H1 (cell line): ENCODE measurements at regions of chr6 and their contacts with region 1.

Region 1: DNA sequence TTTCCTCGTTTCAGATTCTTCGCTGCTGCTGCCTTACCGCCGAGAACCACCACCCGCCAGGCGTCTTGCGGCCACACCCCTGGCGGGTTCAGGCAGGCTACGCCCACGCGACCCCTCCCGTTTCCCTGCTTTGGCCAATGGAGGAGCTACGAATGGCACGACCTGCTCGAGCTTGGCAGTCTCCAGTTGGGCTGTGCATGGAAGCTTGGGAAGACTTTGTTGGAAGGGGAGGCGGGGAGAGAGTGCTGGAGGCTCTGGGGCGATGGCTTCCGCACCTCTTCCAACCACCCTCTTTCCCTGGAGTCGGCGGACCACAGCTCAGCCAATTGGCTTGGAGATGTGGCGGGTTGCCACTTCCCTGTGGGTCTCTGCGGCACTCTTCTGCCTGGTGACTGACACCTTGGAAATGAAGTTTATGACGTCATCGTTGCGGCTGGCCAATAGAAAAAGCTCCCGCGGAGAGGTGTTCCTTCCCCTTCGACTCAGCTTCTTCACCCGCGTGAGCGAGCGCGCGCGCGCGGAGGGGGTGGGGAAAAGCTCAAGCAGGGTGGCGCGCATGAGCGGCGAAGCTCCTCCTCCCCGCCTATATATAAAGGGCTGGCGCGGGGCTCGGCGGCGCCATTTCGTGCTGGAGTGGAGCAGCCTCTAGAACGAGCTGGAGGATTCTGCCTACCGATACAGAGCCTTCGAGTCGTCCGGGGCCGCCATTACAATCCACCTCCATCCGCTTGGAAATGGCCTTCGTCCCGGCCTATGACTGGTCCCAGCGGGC is 3.4 kb downstream of the BRD2 start:
- DNase-seq: peak; percentile 98 to 99
- H3K4me3 ChIP-seq: peak overlapping the region; percentile 90 to 99 (median 98)
- H3K27ac ChIP-seq: peak overlapping the region; percentile 99
- H3K4me1 ChIP-seq: peaks cover 0 to 14% (median 7%) of the 10 kb centered on the region in 4 experiments; a peak in 5 of 7 replicates
- H3K27me3 ChIP-seq: no peaks in the 10 kb centered on the region
- CTCF ChIP-seq: no peak; a peak in 1 of 4 replicates
- EP300 ChIP-seq: no peak; a peak in 1 of 3 replicates
- POLR2A ChIP-seq: peak in 1 of 2 experiments; percentile 99; a peak in 2 of 3 replicates
- RAD21 ChIP-seq: no peak

Region 2: DNA sequence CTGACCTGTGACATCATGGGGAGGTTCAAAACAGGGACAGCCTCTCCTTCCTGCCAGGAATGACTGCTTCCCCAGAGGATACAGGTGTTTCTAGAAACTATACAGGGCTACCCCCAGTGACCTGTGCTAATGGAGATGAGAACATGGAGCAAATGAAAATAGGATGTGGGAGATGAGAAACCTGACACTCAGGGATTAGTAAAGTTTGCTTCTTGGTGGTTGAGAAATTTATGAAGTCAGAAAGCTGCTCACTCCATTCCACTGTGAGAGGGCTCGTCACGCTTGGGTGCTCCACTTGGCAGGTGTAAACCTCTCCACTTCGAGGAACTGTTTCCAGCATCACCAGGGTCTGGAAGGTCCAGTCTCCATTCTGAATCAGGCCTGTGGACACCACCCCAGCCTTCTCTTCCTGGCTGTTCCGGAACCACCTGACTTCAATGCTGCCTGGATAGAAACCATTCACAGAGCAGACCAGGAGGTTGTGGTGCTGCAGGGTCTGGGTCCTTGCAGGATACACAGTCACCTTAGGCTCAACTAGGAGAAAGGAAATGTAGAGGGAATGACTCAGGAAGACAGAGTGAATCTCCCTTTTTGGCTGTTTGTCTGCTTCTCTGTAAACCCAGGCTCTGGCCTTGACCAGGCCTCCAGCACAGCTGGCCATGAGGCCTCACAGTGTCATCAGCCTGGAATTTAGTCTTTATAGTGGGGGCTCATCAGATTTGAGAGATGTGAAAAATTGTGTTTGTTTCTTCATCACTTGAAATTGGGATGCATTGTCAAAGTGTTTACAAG is 452.5 kb before region 1 on chr6:
- CTCF ChIA-PET with region 1: no interaction called
- POLR2A ChIA-PET with region 1: no interaction called
- DNase-seq: no peak
- H3K4me3 ChIP-seq: no peak overlapping the region
- H3K27ac ChIP-seq: no peak overlapping the region
- H3K4me1 ChIP-seq: no peaks in the 10 kb centered on the region
- H3K27me3 ChIP-seq: no peaks in the 10 kb centered on the region
- CTCF ChIP-seq: no peak
- EP300 ChIP-seq: no peak
- POLR2A ChIP-seq: no peak
- RAD21 ChIP-seq: no peak

Region 3: DNA sequence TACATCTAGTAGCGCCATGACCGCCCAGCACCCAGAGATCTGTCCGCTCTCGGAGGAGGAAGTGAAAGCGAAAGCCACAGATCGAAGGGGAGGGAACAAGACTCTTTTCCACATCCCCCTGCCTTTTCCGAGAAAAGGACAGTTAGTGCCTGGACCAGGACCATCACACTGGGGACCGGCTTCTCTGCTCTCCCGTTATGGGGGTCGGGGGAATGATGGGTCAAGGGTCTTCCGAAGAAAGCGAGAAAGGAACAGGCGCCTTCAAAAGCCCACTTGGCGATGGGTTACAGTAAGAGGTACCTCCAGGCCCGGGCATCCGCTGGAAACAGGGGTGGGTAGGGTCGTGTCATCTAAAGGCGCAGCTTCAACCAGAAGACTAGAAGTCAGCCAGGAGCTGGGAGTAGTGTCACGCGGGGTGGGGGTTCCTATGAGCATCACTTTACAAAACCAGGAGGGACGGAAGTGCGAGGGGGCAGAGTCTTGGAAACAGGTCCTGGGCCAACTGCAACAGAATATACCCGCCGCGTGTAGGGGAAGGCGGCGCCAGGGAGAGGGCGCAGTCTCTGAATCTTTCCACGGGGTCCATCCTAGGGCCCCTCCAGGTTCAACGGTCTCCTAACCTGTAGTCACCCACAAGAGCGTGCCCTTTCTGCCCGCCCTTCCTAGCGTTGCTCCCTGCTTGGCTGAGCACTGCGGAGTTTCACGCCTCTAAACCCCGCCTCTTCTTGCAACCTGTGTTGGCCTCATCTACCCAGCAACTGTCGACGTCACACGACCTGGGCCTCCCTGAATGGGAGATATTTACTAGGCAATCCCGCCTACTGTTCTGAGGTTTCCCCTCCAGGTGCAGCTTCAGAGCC is 127.6 kb before region 1 on chr6 and contains the start of gene PSMB8:
- CTCF ChIA-PET with region 1: interaction called, 14 read pairs
- POLR2A ChIA-PET with region 1: interaction called, 26 read pairs
- DNase-seq: peak; percentile 88 to 95
- H3K4me3 ChIP-seq: peak within 1 kb of the TSS; percentile 59 to 93 (median 88)
- H3K27ac ChIP-seq: no peak within 1 kb of the TSS
- H3K4me1 ChIP-seq: peaks cover 0 to 3% (median 0%) of the 10 kb centered on the region in 4 experiments; a peak in 2 of 7 replicates
- H3K27me3 ChIP-seq: peaks cover 0 to 11% (median 10%) of the 10 kb centered on the region in 4 experiments; a peak in 4 of 7 replicates
- CTCF ChIP-seq: peak in 1 of 3 experiments; percentile 8; a peak in 1 of 4 replicates
- EP300 ChIP-seq: no peak
- POLR2A ChIP-seq: peak in 1 of 2 experiments; percentile 75; a peak in 2 of 3 replicates
- RAD21 ChIP-seq: no peak
- total RNA-seq, gene PSMB8: 18.4 and 22.0 TPM in 2 replicates

Region 4: DNA sequence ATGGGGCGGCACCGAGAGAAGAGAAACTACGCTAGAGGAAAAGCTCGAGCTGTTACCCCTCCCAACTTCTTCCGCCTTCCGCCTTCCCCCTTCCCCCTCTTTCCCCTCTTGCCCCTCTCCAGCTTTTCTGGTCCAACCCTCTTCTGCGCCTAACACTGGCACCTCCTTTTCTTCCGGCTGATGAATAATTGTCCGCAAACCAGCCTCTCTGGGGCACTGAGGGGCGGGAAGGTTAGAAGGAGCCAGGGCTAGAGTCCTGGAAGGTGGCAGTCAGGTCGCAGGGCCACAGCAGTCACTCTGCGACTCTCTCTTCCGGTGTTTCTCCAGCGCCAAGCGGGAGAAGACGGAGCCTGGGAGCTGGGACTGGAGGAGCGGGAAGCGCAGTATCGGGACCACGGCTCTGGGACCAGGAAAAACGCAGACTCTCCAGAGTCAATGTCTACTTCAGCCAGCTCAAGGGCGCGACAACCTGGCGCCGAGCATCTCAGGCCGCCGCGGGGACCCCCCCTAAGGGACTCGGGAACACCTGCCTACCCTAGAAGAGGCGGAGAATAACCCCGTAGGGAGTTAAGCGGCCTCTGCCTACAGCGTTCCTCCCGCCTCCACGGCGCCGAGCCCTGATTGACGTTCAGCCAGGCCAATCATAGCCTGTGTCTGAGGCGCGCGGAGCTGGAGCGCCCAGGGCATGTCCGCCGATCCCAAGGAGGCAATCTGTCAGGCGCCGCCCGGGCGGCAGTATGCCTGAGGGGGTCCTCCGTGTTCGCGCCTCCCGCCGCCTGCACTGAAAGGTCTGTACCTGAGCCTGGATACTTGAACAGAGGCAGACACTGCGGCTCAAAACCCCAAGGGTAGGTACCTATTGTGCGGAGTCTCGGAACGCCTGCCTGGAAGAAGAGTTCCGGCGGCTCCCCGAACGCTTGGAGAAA is 77.4 kb before region 1 on chr6:
- CTCF ChIA-PET with region 1: interaction called, 3 read pairs
- POLR2A ChIA-PET with region 1: interaction called, 117 read pairs
- DNase-seq: peak; percentile 84 to 99
- H3K4me3 ChIP-seq: peak overlapping the region; percentile 74 to 92 (median 84)
- H3K27ac ChIP-seq: peak overlapping the region; percentile 39; the same call in 1 of the 2 replicates
- H3K4me1 ChIP-seq: peaks cover 0 to 4% (median 1%) of the 10 kb centered on the region in 4 experiments; a peak in 2 of 7 replicates
- H3K27me3 ChIP-seq: no peaks in the 10 kb centered on the region; a peak in 1 of 7 replicates
- CTCF ChIP-seq: no peak
- EP300 ChIP-seq: no peak
- POLR2A ChIP-seq: peak in 1 of 2 experiments; percentile 69; a peak in 2 of 3 replicates
- RAD21 ChIP-seq: no peak

Region 5: DNA sequence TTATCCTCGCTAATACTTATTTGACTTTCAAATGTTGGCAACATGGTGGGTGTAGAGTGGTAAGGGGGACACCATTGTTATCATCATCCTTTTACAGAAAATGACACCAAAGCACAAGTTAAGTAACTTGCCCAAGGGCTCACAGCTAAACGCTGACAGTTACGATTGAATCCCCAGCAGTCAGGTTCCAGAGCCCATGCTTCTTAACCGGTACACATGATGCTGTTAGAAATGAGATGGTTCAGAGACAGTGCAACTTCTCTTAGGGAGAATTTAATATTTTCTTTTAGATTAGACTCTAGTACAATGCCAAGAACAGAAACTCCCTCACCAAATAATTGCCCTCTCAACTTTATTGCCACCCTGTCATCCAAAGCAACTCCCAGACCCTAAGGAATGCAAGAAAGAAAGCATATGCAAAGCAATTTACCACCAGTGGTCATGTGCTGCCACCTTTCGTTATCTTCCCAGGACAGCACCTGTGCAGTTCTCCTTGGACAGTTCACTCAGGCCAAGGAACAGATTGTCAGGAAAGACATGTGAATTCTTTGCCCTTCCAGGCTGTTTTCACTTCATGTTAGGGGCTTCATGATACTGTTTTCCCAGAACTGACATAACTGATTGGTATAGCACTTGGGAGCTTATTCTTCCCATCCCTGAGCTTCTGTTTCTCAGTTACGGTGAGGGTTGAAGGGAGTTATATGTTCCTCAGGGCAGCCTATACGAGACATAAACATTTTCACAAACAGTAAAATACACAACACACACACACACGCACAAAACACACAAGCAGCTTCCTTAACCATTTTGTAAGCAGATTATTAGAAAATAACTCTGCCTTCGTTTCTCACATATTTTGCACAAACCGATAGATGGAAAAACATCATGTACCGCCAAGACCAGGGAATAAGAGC is 24.0 kb before region 1 on chr6:
- CTCF ChIA-PET with region 1: interaction called, 168 read pairs
- POLR2A ChIA-PET with region 1: interaction called, 1,158 read pairs
- DNase-seq: peak; percentile 15 to 63
- H3K4me3 ChIP-seq: no peak overlapping the region
- H3K27ac ChIP-seq: no peak overlapping the region
- H3K4me1 ChIP-seq: peaks cover 0 to 8% (median 3%) of the 10 kb centered on the region in 4 experiments; a peak in 5 of 7 replicates
- H3K27me3 ChIP-seq: no peaks in the 10 kb centered on the region; a peak in 1 of 7 replicates
- CTCF ChIP-seq: peak; percentile 60 to 92 (median 91)
- EP300 ChIP-seq: no peak
- POLR2A ChIP-seq: no peak
- RAD21 ChIP-seq: peak; percentile 95 to 96

Region 6: GRCh38 chr6:33008944-33009861 is 37.4 kb after region 1 on chr6 and contains the start of gene HLA-DOA:
- CTCF ChIA-PET with region 1: interaction called, 4 read pairs
- POLR2A ChIA-PET with region 1: interaction called, 26 read pairs
- DNase-seq: peak; percentile 69 to 77
- H3K4me3 ChIP-seq: peak within 1 kb of the TSS; percentile 68 to 86 (median 74)
- H3K27ac ChIP-seq: peak within 1 kb of the TSS; percentile 22; the same call in 1 of the 2 replicates
- H3K4me1 ChIP-seq: peaks cover 5 to 10% (median 6%) of the 10 kb centered on the region in 4 experiments
- H3K27me3 ChIP-seq: no peaks in the 10 kb centered on the region
- CTCF ChIP-seq: no peak
- EP300 ChIP-seq: no peak
- POLR2A ChIP-seq: peak in 1 of 2 experiments; percentile 71; a peak in 2 of 3 replicates
- RAD21 ChIP-seq: no peak
- total RNA-seq, gene HLA-DOA: 23.7 TPM in 2 replicates

Region 7: DNA sequence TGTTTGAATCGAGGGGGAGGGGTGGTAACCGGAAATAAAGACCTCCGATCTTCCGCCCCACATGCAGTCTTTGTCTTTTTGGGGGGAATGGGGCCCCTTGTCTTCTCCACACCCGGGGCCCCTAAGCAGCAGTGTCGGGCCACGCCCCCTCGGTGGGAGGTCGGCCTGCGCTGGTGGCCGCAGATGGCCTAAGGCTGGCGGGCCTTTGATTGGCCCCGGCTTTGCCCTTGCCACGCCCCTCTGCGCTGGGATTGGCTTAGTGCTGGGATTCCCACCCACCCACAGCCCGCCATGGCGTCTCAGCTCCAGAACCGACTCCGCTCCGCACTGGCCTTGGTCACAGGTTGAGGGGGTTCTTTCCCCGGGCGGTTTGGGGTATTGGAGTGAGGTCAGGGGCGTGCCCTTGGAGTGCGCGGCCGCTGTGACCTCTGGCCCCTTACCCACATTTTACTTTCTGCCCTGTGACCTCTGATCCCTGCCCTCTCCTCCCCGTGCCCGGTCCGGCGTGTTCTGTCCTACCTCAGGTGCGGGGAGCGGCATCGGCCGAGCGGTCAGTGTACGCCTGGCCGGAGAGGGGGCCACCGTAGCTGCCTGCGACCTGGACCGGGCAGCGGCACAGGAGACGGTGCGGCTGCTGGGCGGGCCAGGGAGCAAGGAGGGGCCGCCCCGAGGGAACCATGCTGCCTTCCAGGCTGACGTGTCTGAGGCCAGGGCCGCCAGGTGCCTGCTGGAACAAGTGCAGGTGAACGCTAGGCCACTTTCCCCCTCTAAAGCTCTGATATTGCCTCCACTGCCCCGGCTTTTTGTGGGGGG is 232.8 kb after region 1 on chr6 and contains the start of gene HSD17B8:
- CTCF ChIA-PET with region 1: no interaction called
- POLR2A ChIA-PET with region 1: interaction called, 13 read pairs
- DNase-seq: peak; percentile 72 to 98
- H3K4me3 ChIP-seq: peak within 1 kb of the TSS; percentile 71 to 93 (median 72)
- H3K27ac ChIP-seq: no peak within 1 kb of the TSS
- H3K4me1 ChIP-seq: peaks cover 4 to 36% (median 11%) of the 10 kb centered on the region in 4 experiments
- H3K27me3 ChIP-seq: peaks cover 9 to 32% (median 25%) of the 10 kb centered on the region in 4 experiments; a peak in 6 of 7 replicates
- CTCF ChIP-seq: no peak
- EP300 ChIP-seq: no peak
- POLR2A ChIP-seq: peak in 1 of 2 experiments; percentile 48; a peak in 2 of 3 replicates
- RAD21 ChIP-seq: no peak
- total RNA-seq, gene HSD17B8: 3.3 and 3.6 TPM in 2 replicates

Region 8: DNA sequence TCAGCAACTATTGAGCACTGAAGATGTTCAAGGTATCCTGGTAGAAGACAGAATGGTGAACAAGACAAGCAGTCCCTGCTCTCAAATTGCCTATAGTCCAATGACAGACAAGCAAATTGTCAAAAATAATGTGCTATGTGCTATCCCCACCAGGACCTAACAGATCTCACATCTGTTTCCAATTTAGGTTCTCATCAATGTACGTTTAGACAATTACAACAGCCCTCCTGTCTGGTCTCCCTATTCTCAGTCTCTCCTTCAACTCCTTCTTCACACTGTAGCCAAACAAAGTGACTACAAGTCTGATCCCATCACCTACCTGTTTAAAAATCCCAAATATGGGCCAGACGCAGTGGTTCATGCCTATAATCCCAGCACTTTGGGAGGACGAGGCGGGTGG is 334.6 kb after region 1 on chr6:
- CTCF ChIA-PET with region 1: no interaction called
- POLR2A ChIA-PET with region 1: no interaction called
- DNase-seq: no peak
- H3K4me3 ChIP-seq: no peak overlapping the region
- H3K27ac ChIP-seq: no peak overlapping the region
- H3K4me1 ChIP-seq: no peaks in the 10 kb centered on the region
- H3K27me3 ChIP-seq: no peaks in the 10 kb centered on the region
- CTCF ChIP-seq: no peak
- EP300 ChIP-seq: no peak
- POLR2A ChIP-seq: no peak
- RAD21 ChIP-seq: no peak